Right ventricle myocardium inferior (tissue), 1 donor: ENCODE measurements at regions of chr16 and their contacts with region 1.

Region 1: GRCh38 chr16:2500918-2501750 is 12.6 kb upstream of the ATP6V0C start:
- DNase-seq: peak; percentile 93
- ATAC-seq: peak; percentile 82

Region 2: DNA sequence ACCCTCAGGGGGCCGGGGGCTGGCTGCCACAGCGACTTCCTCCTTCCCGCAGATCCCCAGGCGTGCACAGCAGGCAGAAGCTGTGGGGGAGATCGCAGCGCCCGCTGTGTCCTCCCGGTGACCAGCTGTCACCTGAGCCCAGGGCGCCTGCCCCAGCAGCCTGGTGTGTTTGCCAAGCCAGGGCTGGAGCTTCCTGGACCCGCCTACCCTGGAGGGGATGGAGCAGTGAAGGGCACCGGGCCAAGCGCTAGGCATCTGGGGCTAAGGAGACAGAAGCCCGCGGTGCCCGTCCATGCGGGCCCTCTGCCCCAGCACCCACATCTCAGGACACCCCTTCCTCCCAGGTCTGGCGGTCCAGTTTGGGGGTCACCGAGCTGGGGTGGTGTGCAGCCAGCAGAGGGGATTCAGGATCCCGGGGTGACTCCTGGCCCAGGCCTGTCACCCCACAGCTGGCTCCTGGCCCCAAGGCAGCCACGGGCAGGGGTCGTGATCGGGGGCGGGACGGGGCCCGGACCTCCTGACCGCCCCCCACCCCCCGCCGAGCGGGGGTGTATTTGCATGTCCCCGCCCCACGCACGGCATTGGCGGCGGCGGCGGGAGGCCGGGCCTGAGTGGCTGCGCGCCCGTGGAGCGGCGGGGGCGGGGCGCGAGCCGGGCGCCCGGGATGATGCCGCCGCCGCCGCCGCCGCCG is 353.0 kb before region 1 on chr16 and contains the start of gene RAB26:
- intact Hi-C with region 1: no loop called
- DNase-seq: peak; percentile 88
- ATAC-seq: peak; percentile 86
- total RNA-seq, gene RAB26: 0.87 TPM

Region 3: GRCh38 chr16:2205104-2205966 is 295.8 kb before region 1 on chr16 and contains the start of gene MLST8:
- intact Hi-C with region 1: no loop called
- DNase-seq: peak; percentile 93
- ATAC-seq: peak; percentile 89
- total RNA-seq, gene MLST8: 25.3 TPM

Region 4: GRCh38 chr16:2267913-2268666 is 233.0 kb before region 1 on chr16 and contains the start of gene RNPS1:
- intact Hi-C with region 1: loop called (anchors 10 kb)
- DNase-seq: peak; percentile 99
- ATAC-seq: peak; percentile 98
- total RNA-seq, gene RNPS1: 105 TPM

Region 5: GRCh38 chr16:2340564-2341455 is 160.3 kb before region 1 on chr16 and contains the start of gene ABCA3:
- intact Hi-C with region 1: loop called (anchors 2 kb)
- DNase-seq: peak; percentile 95
- ATAC-seq: peak; percentile 98
- total RNA-seq, gene ABCA3: 7.4 TPM

Region 6: DNA sequence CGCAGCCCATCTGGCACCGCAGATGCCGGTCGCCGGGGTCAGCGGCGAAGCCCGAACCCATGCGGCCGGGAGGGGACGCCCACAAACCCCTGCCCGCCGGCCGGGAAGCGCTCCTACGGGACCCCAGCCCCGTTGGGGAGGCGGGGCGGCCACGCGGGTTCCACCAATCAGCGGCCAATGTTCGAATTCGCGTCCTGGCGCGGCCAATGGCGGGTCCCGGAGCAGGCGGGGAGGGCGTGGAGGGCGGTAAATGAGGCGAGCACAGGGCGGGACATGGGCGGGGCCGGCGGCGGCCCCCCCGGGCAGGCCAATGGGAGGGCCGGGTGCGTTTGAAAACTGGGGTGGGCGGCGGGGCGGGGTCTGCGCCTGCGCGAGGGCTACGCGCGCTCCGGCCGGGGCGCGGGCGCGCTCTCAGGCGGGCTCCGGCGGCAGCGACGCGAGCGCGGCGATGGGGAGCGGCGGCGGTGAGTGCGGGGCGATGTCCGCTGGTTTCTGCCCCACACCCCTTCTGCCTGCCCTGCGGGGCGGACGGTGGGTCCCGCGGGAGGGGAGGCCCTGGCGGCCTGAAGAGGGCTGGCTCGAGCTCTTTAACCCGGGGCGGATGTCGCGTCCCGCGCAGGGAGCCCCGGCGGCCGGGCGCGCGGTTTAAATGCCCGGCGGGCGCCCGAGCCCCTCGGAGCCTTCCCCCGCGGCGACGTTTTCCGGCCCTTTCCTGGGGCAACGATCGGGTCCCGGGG is 71.9 kb before region 1 on chr16 and contains the start of gene CCNF:
- intact Hi-C with region 1: loop called (anchors 5 kb)
- DNase-seq: peak; percentile 99
- ATAC-seq: peak; percentile 99
- total RNA-seq, gene CCNF: 1.2 TPM

Region 7: DNA sequence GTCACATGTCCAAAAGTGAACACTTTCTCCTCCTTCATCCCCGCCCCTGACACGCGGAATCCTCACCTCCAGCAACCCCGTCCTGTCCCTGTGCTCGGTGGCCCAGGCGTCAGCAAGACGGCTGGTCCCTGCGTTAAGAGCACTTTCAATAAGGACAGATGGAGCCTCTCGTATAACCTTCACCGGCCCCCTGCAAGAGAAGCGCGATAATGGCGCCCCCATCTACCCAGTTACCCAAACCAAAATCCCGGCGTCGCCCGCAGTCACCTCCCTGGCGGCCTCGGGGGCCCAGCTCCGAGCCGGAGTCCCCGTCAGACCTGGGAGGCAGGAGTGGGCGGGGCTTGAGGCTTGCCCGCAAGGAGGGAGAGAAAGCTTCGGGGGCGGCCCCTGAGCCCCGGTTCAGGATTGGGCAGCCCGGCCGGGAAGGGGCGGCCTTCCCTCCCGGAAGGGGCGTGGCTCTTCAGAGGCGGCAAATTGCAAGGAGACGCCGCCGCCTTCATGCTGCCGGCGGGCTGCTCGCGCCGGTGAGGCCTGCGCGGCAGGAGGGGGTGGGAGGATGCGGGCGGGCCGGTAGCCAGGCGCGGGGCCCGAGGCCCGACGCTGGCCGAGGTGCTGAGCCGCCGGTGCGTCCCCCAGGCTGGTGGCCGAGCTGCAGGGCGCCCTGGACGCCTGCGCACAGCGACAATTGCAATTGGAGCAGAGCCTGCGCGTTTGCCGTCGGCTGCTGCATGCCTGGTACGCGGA is 41.3 kb before region 1 on chr16 and contains the start of gene TEDC2:
- intact Hi-C with region 1: loop called (anchors 5 kb)
- DNase-seq: peak; percentile 98
- ATAC-seq: peak; percentile 98
- total RNA-seq, gene TEDC2: 0.95 TPM

Region 8: DNA sequence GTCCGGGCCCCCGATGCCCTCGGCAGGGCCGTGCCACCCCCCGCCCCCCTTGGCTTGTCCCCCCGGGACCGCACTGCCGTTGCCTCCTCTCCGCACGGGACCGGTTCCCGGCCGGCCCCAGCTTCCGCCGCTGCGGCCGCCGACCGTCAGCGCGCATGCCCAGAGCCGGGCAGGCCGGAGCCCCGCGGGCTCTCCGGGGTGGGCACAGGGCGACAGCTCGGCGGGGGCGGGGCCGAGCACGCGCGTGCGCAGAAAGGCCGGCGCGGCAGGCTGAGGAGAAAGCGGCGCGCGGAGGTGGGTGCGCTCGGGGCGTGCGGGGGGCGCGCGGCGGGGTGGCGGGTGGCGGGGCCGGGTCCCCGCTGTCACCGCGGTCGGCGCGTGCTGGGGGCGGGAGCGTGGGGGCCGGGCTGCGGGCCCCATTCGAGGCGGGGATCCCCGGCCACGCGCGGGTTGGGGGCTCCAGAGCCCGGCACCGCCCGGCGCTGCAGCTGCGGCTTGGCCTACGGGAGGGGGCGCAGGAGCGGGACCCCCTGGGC is 26.2 kb before region 1 on chr16 and contains the start of gene TBC1D24:
- intact Hi-C with region 1: loop called (anchors 2 kb)
- DNase-seq: peak; percentile 93
- ATAC-seq: peak; percentile 95
- total RNA-seq, gene TBC1D24: 14.8 TPM

Region 9: GRCh38 chr16:2513405-2514322 is 12.5 kb after region 1 on chr16 and contains the start of gene ATP6V0C:
- intact Hi-C with region 1: loop called (anchors 1 kb)
- DNase-seq: peak; percentile 97
- ATAC-seq: peak; percentile 87
- total RNA-seq, gene ATP6V0C: 137 TPM